ENCODE measurements at regions of chr1 and their contacts with region 1.

Region 1: GRCh38 chr1:153827168-153827964 is 52.2 kb downstream of the SLC27A3 start:
- DNase-seq: no peak
- H3K4me3 ChIP-seq: no peak overlapping the region
- H3K27ac ChIP-seq: no peak overlapping the region
- H3K4me1 ChIP-seq: no peaks in the 10 kb centered on the region
- H3K27me3 ChIP-seq: no peaks in the 10 kb centered on the region
- CTCF ChIP-seq: no peak

Region 2: DNA sequence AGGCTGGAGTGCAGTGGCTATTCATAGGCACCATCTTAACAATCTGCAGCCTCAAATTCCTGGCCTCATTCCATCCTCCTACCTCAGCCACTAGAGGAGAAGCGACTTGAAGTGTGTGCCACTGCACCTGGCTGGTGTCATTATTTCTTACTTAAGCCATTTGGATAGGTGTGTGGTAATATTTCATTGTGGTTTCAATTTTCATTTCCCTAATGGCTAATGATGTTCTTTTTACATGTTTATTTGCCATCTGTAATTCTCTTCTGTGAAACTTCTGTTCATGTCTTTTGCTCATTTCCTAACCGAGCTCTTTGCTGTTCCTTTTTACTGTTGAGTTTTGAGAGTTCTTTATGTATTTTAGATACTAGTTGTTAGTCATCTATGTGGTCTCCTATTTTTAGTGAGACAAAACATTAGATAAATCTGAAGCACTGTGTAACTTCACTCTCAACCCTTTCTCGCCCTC is 14.7 kb after region 1 on chr1:
- CTCF ChIA-PET with region 1: interaction called, 12 read pairs
- POLR2A ChIA-PET with region 1: interaction called, 20 read pairs
- intact Hi-C with region 1: no loop called
- DNase-seq: no peak
- H3K4me3 ChIP-seq: no peak overlapping the region
- H3K27ac ChIP-seq: no peak overlapping the region
- H3K4me1 ChIP-seq: no peaks in the 10 kb centered on the region
- H3K27me3 ChIP-seq: no peaks in the 10 kb centered on the region
- CTCF ChIP-seq: no peak

Measured in PC-9 (cell line).